MCF 10A (cell line): ENCODE measurements at regions of chr17 and their contacts with region 1.

Region 1: GRCh38 chr17:46139432-46140210 is 53.6 kb downstream of the KANSL1 start:
- DNase-seq: no peak
- H3K4me3 Mint-ChIP-seq: no peak overlapping the region
- H3K27ac Mint-ChIP-seq: no peak overlapping the region
- H3K4me1 Mint-ChIP-seq: peaks cover 62% of the 10 kb centered on the region
- H3K27me3 Mint-ChIP-seq: no peaks in the 10 kb centered on the region
- CTCF ChIP-seq: no peak

Region 2: GRCh38 chr17:46110219-46110618 is 29.4 kb before region 1 on chr17:
- CTCF ChIA-PET with region 1: no interaction called
- POLR2A ChIA-PET with region 1: no interaction called
- intact Hi-C with region 1: no loop called
- DNase-seq: no peak
- H3K4me3 Mint-ChIP-seq: no peak overlapping the region
- H3K27ac Mint-ChIP-seq: no peak overlapping the region
- H3K4me1 Mint-ChIP-seq: peaks cover 27% of the 10 kb centered on the region
- H3K27me3 Mint-ChIP-seq: no peaks in the 10 kb centered on the region
- CTCF ChIP-seq: no peak

Region 3: GRCh38 chr17:46184696-46185095 is 45.1 kb after region 1 on chr17:
- CTCF ChIA-PET with region 1: no interaction called
- POLR2A ChIA-PET with region 1: interaction called, 3 read pairs
- intact Hi-C with region 1: loop called (anchors 5 kb)
- DNase-seq: no peak
- H3K4me3 Mint-ChIP-seq: no peak overlapping the region
- H3K27ac Mint-ChIP-seq: no peak overlapping the region
- H3K4me1 Mint-ChIP-seq: peaks cover 60% of the 10 kb centered on the region
- H3K27me3 Mint-ChIP-seq: no peaks in the 10 kb centered on the region
- CTCF ChIP-seq: no peak

Region 4: DNA sequence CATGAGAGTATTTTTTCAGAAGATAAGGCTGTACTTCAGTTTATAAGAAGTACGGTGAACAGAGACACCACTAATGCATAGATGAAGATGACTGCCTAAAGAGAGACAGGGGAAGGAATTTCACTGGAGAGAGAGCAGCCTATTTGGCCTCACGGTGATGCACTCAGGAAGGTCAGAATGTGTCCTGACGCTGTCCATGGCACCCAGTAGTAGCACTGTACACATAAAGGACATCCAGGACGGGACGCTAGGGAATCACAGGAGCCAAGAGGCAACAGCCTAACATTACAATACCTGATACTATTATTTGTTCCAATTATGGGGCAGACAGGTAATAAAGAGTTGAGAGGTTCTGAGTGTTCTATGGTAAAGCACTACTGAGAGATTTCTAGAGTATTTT is 130.4 kb after region 1 on chr17:
- CTCF ChIA-PET with region 1: no interaction called
- POLR2A ChIA-PET with region 1: no interaction called
- intact Hi-C with region 1: no loop called
- DNase-seq: no peak
- H3K4me3 Mint-ChIP-seq: no peak overlapping the region
- H3K27ac Mint-ChIP-seq: no peak overlapping the region
- H3K4me1 Mint-ChIP-seq: peaks cover 17% of the 10 kb centered on the region
- H3K27me3 Mint-ChIP-seq: peaks cover 34% of the 10 kb centered on the region
- CTCF ChIP-seq: no peak